ENCODE measurements at regions of chr10 and their contacts with region 1.

Region 1: GRCh38 chr10:52488606-52489485 is 174.8 kb downstream of the DKK1 start:
- DNase-seq: peak in 1 of 2 experiments; percentile 57
- ATAC-seq: peak in 1 of 2 experiments; percentile 73; a peak in 3 of 6 replicates
- H3K4me3 ChIP-seq: no peak overlapping the region
- H3K27ac ChIP-seq: peak overlapping the region; percentile 74 to 87
- H3K4me1 ChIP-seq: peaks cover 41% of the 10 kb centered on the region
- CTCF ChIP-seq: peak; percentile 80
- EP300 ChIP-seq: no peak
- POLR2A ChIP-seq: no peak
- RAD21 ChIP-seq: peak; percentile 86 to 93

Region 2: DNA sequence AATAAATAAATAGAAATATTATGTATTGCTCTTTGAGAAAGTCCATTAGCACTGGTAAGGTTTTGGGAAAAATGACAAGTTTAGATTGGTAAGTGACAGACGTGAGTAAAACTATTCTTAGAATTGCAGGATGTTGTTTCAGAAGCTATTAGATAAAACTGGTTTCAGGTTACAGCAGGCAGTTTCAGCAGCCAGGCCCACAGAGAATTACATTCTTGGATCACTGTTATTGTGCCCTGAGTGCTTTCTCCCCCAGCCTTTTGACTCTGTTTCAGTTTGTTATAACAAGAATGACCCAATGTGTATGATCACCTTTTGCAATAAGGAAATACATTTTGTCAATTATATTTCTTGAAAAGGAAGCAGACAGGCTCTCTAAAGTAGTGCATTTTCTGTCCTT is 88.3 kb before region 1 on chr10:
- CTCF ChIA-PET with region 1: no interaction called
- POLR2A ChIA-PET with region 1: no interaction called
- DNase-seq: peak in 1 of 2 experiments; percentile 12
- ATAC-seq: no peak
- H3K4me3 ChIP-seq: no peak overlapping the region
- H3K27ac ChIP-seq: no peak overlapping the region
- H3K4me1 ChIP-seq: no peaks in the 10 kb centered on the region
- CTCF ChIP-seq: no peak
- EP300 ChIP-seq: no peak
- POLR2A ChIP-seq: no peak
- RAD21 ChIP-seq: no peak

Region 3: DNA sequence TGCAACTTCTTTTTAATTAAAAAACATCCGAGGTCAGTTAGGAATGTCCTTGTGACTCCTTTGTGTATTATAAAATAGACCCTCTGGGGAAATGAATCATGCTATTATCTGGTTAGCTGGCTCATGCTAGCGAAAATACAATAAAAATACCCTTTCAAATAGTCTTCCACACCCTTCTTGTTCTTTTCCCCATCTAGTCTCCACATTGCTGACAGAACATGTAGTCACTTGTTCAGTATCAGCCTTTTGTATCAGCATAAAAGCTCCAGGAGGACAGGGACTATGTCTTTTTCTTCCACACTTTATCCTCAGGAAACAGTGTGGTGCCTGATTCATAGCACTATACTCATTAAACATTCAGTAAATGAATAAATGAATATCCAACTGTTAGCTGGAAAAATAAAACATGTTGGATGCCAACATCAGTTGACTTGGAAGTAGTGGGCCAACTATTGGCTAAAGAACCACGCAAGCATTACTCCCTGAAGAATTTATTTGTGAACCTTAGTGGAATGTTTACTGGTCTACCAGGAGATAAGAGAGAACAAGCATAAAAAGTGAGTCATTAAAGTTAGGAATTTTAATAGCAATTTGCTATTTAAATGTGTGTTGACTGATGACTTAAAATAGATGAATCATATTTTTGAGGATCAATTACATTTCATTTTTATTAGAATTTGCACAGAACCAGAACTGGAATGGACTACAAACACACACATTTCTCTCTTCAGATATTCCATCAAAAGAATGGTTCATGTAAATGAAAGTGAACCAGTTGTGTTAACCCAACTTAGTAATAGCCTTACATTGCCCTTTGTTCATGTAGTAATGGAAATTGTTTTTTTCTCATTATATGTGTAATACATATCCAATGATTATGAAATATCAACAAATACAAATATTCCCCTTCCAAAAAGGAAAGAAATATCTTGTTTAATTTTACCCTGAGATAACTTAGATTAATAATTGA is 45.1 kb before region 1 on chr10:
- CTCF ChIA-PET with region 1: interaction called, 24 read pairs
- POLR2A ChIA-PET with region 1: interaction called, 10 read pairs
- DNase-seq: peak; percentile 43 to 91
- ATAC-seq: peak; percentile 90
- H3K4me3 ChIP-seq: no peak overlapping the region
- H3K27ac ChIP-seq: peak overlapping the region; percentile 84 to 87
- H3K4me1 ChIP-seq: peaks cover 59% of the 10 kb centered on the region
- CTCF ChIP-seq: no peak
- EP300 ChIP-seq: peak; percentile 91; a peak in 4 of 5 replicates
- POLR2A ChIP-seq: no peak
- RAD21 ChIP-seq: peak; percentile 24 to 36; a peak in 2 of 5 replicates

Region 4: GRCh38 chr10:52566471-52567246 is 77.8 kb after region 1 on chr10:
- CTCF ChIA-PET with region 1: interaction called, 25 read pairs
- POLR2A ChIA-PET with region 1: no interaction called
- DNase-seq: peak; percentile 32 to 65
- ATAC-seq: peak; percentile 59 to 83; a peak in 4 of 6 replicates
- H3K4me3 ChIP-seq: no peak overlapping the region
- H3K27ac ChIP-seq: peak overlapping the region; percentile 37 to 45
- H3K4me1 ChIP-seq: peaks cover 12% of the 10 kb centered on the region
- CTCF ChIP-seq: peak; percentile 87
- EP300 ChIP-seq: no peak
- POLR2A ChIP-seq: no peak
- RAD21 ChIP-seq: peak; percentile 91 to 92

Measured in A549 (cell line).